Mucosa of descending colon (tissue), 3 donors: ENCODE measurements at regions of chr15 and their contacts with region 1.

Region 1: GRCh38 chr15:42704492-42704926 is 32.4 kb downstream of the CDAN1 start:
- DNase-seq: peak in 2 of 3 donors; percentile 39 to 83
- ATAC-seq: peak; percentile 95
- H3K4me3 ChIP-seq: no peak overlapping the region
- H3K4me1 ChIP-seq: no peaks in the 10 kb centered on the region
- CTCF ChIP-seq: peak; percentile 66

Region 2: DNA sequence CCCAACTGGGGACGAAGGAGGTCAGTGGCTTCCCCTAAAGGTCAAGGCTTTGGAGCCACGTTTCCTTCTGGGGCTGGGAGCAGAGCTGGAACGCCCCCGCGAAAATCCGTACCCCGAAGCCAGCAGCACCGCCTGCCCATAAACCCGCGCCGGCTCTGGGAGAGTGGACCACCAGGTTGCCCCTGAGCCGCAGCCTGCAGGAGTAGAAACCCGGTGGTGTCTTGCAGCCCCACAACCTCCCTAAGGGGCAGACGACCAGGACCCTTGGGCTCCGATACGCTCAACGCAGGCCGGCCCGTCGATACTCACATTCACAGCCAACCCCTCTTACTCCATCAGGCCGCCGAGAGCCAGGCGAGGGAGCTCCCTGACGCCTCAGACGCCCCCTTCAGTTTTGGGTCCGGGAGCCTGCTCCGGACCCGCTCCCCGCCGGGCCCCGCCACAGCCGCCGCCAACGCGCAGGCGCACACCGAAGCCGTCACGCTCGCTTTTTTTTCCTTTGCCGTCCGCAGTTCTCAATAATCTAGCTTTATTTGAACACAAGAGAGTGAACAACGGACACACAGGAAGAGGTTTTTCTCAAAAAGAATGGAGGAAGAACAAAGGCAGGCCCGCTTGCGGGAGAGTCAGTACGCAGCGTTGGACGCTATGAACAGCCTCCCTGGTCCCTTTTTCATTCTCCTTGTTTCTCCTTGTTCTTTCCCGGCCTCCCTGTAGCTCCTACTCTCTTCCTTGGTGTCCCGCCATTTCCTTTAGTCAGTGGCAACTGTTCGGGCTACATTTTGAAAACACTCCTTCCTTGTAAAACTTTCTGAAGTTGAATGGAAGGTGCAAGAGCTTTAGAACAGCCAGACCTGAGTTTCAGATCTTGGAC is 213.6 kb before region 1 on chr15 and contains the start of gene ZNF106:
- intact Hi-C with region 1: no loop called
- DNase-seq: peak; percentile 84 to 91 (median 90)
- ATAC-seq: peak; percentile 78
- H3K4me3 ChIP-seq: peak within 1 kb of the TSS; percentile 92
- H3K4me1 ChIP-seq: peaks cover 16% of the 10 kb centered on the region
- CTCF ChIP-seq: no peak
- total RNA-seq, gene ZNF106: 40.0 to 94.9 (median 45.8) TPM

Region 3: GRCh38 chr15:42920519-42921227 is 216.2 kb after region 1 on chr15 and contains the start of gene TTBK2:
- intact Hi-C with region 1: loop called (anchors 10 kb)
- DNase-seq: peak; percentile 98 to 99 (median 99)
- ATAC-seq: peak; percentile 99
- H3K4me3 ChIP-seq: peak within 1 kb of the TSS; percentile 98
- H3K4me1 ChIP-seq: no peaks in the 10 kb centered on the region
- CTCF ChIP-seq: peak; percentile 12
- total RNA-seq, gene TTBK2: 9.7 to 27.6 (median 11.4) TPM